ENCODE measurements at regions of chr9 and their contacts with region 1.

Region 1: DNA sequence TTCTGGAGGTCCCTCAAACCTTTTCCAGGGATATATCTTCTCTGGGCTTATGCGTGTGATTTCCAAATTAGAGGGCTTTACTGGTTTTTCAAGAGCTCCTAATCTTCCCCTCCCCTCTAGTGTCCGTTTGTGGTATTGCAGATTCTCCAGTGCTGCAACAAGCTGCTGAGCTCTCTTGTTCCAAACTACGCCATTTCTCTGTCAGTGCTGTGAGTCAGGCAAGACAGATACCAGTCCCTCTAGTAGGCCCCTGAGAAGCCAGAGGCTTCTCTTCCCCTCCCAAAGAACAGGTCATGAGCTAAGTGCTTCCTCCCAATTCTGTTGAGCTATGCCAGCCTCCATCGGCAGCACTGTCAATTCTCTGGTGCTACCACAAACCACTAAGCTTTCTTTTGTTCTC is 149.5 kb downstream of the FANCC start:
- DNase-seq: peak; percentile 61

Region 2: GRCh38 chr9:95157481-95158151 is 10.4 kb before region 1 on chr9:
- CTCF ChIA-PET with region 1: interaction called, 12 read pairs
- POLR2A ChIA-PET with region 1: no interaction called
- DNase-seq: no peak

Region 3: GRCh38 chr9:95181226-95181818 is 13.3 kb after region 1 on chr9:
- CTCF ChIA-PET with region 1: interaction called, 10 read pairs
- POLR2A ChIA-PET with region 1: no interaction called
- DNase-seq: no peak

Measured in HEK293T (cell line).